Mammary epithelial cell (primary cell): ENCODE measurements at regions of chr11 and their contacts with region 1.

Region 1: GRCh38 chr11:110296226-110297075 is at the start of gene RDX:
- DNase-seq: peak; percentile 84
- H3K4me3 ChIP-seq: peak within 1 kb of the TSS; percentile 85 to 99 (median 99)
- H3K27ac ChIP-seq: peak within 1 kb of the TSS; percentile 88
- H3K4me1 ChIP-seq: peaks cover 30% of the 10 kb centered on the region
- H3K27me3 ChIP-seq: no peaks in the 10 kb centered on the region
- CTCF ChIP-seq: no peak
- total RNA-seq, gene RDX: 64.8 to 116 TPM

Region 2: DNA sequence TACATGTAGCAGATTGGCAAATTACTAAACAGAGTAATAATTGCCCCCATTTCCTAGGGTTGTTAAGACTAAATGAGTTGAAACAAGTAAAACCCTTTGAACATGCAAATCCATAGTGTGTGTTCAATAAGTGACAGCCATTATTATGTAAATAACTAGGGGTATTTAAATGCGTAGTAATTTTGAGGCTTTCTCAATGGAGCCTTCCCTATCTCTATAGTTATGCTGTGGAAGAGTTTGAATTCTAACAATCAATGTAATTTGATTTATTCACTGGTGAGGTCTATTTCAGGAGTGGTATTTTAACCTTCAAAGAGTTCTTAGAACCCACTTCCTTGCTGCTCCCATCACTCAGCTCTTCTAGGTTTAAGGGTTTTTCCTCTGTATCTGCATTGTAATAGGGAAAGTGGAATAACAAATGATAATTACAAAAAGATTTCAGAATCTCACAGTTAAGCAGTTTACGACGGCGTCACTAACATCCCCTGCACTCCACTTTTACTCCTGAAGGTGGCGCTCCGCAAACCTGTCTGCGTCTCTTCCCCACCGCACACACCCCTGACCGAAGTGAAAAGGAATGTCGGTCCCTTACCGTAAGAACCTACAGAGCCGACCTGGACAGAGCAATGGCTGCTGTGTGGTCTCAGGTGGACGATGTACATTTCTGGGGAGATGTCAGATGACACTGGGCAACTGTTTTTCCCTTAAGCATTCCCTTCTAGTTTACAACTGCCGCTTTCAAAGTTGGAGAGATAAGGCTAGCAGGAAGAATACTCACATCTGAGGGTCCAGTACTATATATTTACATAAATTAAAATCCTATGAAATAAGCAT is 122.4 kb before region 1 on chr11:
- CTCF ChIA-PET with region 1: no interaction called
- dilution Hi-C with region 1: no loop called
- in situ Hi-C with region 1: no loop called
- intact Hi-C with region 1: no loop called
- DNase-seq: peak; percentile 50
- H3K4me3 ChIP-seq: no peak overlapping the region
- H3K27ac ChIP-seq: peak overlapping the region; percentile 36
- H3K4me1 ChIP-seq: peaks cover 20% of the 10 kb centered on the region
- H3K27me3 ChIP-seq: no peaks in the 10 kb centered on the region
- CTCF ChIP-seq: peak; percentile 91 to 96

Region 3: GRCh38 chr11:110207123-110207522 is 89.3 kb before region 1 on chr11:
- CTCF ChIA-PET with region 1: no interaction called
- dilution Hi-C with region 1: no loop called
- in situ Hi-C with region 1: no loop called
- intact Hi-C with region 1: loop called (anchors 2 kb)
- DNase-seq: no peak
- H3K4me3 ChIP-seq: no peak overlapping the region
- H3K27ac ChIP-seq: no peak overlapping the region
- H3K4me1 ChIP-seq: no peaks in the 10 kb centered on the region
- H3K27me3 ChIP-seq: no peaks in the 10 kb centered on the region
- CTCF ChIP-seq: no peak

Region 4: DNA sequence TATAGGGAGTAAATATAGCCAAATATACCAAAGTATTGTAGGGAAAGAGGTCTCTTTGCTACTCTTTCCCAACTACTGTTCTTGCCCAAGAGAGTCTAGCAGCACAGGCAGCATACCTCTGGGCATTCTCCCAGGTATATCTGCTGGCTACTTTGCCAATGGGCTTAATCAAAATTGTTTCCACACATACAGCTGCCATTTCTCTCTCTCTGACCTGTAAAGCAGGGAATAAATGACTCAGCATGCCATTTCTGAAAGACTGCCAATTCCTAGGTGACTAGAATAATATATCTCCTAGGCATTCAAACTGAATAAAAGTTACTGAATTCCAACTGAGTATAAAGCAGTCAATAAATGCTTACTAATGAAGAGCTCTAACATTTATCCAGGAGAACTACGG is 44.6 kb before region 1 on chr11:
- CTCF ChIA-PET with region 1: no interaction called
- dilution Hi-C with region 1: no loop called
- in situ Hi-C with region 1: no loop called
- intact Hi-C with region 1: loop called (anchors 5 kb)
- DNase-seq: peak; percentile 87
- H3K4me3 ChIP-seq: no peak overlapping the region
- H3K27ac ChIP-seq: peak overlapping the region; percentile 10
- H3K4me1 ChIP-seq: peaks cover 6% of the 10 kb centered on the region
- H3K27me3 ChIP-seq: no peaks in the 10 kb centered on the region
- CTCF ChIP-seq: no peak

Region 5: GRCh38 chr11:110366291-110366690 is 69.8 kb after region 1 on chr11:
- CTCF ChIA-PET with region 1: no interaction called
- dilution Hi-C with region 1: no loop called
- in situ Hi-C with region 1: no loop called
- intact Hi-C with region 1: loop called (anchors 2 kb)
- DNase-seq: peak; percentile 35
- H3K4me3 ChIP-seq: no peak overlapping the region
- H3K27ac ChIP-seq: no peak overlapping the region
- H3K4me1 ChIP-seq: peaks cover 9% of the 10 kb centered on the region
- H3K27me3 ChIP-seq: no peaks in the 10 kb centered on the region
- CTCF ChIP-seq: no peak

Region 6: GRCh38 chr11:110430267-110431050 is 134.0 kb after region 1 on chr11:
- CTCF ChIA-PET with region 1: no interaction called
- dilution Hi-C with region 1: no loop called
- in situ Hi-C with region 1: no loop called
- intact Hi-C with region 1: loop called (anchors 1 kb)
- DNase-seq: peak; percentile 74
- H3K4me3 ChIP-seq: peak overlapping the region; percentile 60 to 93 (median 90)
- H3K27ac ChIP-seq: peak overlapping the region; percentile 67
- H3K4me1 ChIP-seq: peaks cover 17% of the 10 kb centered on the region
- H3K27me3 ChIP-seq: no peaks in the 10 kb centered on the region
- CTCF ChIP-seq: no peak

Region 7: DNA sequence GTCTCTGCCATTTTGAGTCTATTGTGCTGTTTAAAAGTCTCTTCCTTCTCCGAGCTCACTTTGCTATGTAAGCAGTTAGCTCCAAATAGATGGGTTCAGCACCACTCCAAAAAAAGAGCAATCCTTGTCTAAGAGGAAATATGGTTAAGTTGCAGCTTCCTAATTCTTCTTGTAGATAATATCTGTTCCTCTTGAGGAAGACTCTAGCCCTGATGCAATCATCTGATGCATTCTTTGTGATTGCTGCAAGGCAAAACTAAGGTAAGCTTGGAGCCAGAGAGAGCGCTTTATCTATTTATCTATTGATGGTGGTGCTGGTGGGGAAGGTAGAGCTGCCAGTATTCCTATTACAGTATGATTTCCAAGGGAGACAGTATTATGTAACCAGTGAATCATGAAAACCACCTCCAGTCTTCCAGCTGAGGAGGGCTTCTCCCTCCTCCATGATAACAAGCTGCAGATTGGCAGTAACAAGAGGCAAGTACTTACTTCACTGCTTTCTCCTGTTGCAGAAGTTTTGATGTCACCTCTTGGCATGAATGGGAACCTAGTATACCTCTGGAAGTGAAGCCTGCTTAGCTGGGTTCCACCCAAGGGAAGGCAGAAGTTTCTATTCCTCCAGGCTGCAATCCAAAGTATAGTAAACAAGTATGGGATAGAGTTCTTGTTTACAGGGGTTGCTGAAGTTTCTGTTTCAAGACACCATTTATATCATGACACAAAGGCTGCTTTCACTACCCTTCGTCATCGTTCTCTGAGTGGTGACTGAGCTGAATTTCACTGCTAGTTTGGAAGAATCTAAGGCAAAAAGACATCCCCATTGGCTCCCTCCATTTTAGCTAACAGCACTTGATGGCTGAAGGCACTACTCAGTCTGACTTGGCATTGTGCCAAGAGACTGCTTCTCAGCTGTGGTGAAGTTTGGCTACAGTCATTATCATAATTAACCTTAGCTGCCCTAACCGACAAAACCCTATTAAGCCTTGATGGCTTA is 183.0 kb after region 1 on chr11:
- CTCF ChIA-PET with region 1: no interaction called
- dilution Hi-C with region 1: no loop called
- in situ Hi-C with region 1: no loop called
- intact Hi-C with region 1: no loop called
- DNase-seq: peak; percentile 62
- H3K4me3 ChIP-seq: no peak overlapping the region
- H3K27ac ChIP-seq: no peak overlapping the region
- H3K4me1 ChIP-seq: peaks cover 9% of the 10 kb centered on the region
- H3K27me3 ChIP-seq: no peaks in the 10 kb centered on the region
- CTCF ChIP-seq: no peak